Pancreas (tissue), 10 donors: ENCODE measurements at regions of chr2 and their contacts with region 1.

Region 1: GRCh38 chr2:237572021-237572741 is 5.8 kb downstream of the PRLH start:
- DNase-seq: peak; percentile 79 to 99 (median 91)
- ATAC-seq: peak; percentile 91 to 97 (median 96)
- H3K4me3 ChIP-seq: no peak overlapping the region
- H3K27ac ChIP-seq: no peak overlapping the region
- H3K4me1 ChIP-seq: peaks cover 0 to 7% (median 6%) of the 10 kb centered on the region in 3 donors
- H3K27me3 ChIP-seq: no peaks in the 10 kb centered on the region
- CTCF ChIP-seq: peak; percentile 97 to 98 (median 98)

Region 2: GRCh38 chr2:237154082-237154638 is 418.0 kb before region 1 on chr2:
- intact Hi-C with region 1: loop called in 1 of 3 experiments (anchors 10 kb)
- DNase-seq: peak in 1 of 6 donors; percentile 37
- ATAC-seq: peak in 3 of 4 donors; percentile 72 to 83 (median 78)
- H3K4me3 ChIP-seq: no peak overlapping the region
- H3K27ac ChIP-seq: no peak overlapping the region
- H3K4me1 ChIP-seq: no peaks in the 10 kb centered on the region
- H3K27me3 ChIP-seq: no peaks in the 10 kb centered on the region
- CTCF ChIP-seq: peak in 1 of 4 donors; percentile 28

Region 3: DNA sequence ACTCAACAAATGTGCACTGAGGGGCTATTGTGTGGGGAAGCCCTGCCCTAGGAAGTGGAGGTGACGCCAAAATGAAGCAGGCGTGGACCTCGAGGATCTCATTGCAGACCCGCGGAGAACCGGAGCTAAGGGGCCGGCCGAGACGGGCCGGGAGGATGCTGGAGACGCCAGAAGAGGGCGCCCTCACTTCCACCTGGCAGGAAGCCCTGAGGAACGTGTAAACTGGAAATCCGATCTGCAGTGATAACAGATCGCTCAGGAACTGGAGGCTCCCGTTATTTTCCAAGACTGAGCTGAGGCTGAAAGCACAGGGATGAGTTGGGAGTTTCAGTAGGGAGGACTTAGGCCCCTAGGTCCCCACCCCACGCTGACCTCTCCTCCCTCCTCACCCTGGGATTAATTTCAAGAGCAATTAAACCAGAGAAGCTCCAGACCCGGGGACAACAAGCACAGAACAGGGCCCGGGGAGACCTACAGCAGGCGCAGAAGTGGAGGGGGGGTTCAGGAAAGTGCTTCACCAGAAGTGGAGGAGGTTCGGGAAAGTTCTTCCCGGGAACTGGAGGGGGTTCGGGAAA is 150.6 kb before region 1 on chr2:
- intact Hi-C with region 1: loop called in 1 of 3 experiments (anchors 5 kb)
- DNase-seq: peak; percentile 35 to 85 (median 70)
- ATAC-seq: peak; percentile 75 to 96 (median 91)
- H3K4me3 ChIP-seq: no peak overlapping the region
- H3K27ac ChIP-seq: no peak overlapping the region
- H3K4me1 ChIP-seq: peaks cover 0 to 4% (median 2%) of the 10 kb centered on the region in 3 donors
- H3K27me3 ChIP-seq: peaks cover 0 to 6% (median 0%) of the 10 kb centered on the region in 4 donors
- CTCF ChIP-seq: peak; percentile 50 to 75 (median 64)

Region 4: GRCh38 chr2:237512774-237513466 is 59.3 kb before region 1 on chr2:
- intact Hi-C with region 1: loop called in 2 of 3 experiments (anchors 5 kb)
- DNase-seq: peak; percentile 85 to 94 (median 88)
- ATAC-seq: peak; percentile 72 to 91 (median 88)
- H3K4me3 ChIP-seq: no peak overlapping the region
- H3K27ac ChIP-seq: peak overlapping the region; percentile 12 to 71 (median 47)
- H3K4me1 ChIP-seq: peaks cover 14 to 24% (median 15%) of the 10 kb centered on the region in 3 donors
- H3K27me3 ChIP-seq: no peaks in the 10 kb centered on the region
- CTCF ChIP-seq: peak; percentile 83 to 95 (median 92)

Region 5: DNA sequence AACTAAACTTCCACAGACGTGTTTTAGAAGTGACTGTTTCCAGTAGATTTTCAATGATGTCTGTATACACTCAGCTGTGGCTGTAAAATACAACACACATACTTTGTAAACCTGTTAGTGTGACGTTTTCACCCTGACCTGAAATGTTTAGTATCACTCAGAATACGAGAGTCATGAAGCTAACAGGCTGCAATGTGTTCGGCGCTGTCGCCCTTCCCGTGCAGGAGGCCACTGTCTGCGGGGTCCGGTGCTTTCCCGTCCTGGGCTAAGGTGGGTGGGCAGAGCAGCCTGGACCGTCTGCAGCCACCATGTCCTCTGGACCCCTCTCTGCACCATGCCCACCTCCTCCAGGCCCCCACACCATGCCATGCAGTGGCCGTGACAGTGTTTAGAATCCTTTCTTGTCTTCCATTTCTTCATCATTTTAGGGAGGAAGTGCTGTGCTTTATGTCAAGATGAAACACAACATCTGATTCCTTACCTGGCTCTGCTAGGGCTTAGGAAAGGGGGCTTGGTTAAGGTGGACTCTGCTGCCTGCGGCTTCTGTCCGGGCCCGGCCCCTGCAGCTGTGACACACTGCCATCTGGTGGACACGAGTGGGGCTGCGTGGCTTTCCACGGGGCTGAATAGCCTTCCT is 172.6 kb after region 1 on chr2:
- intact Hi-C with region 1: loop called in 1 of 3 experiments (anchors 10 kb)
- DNase-seq: peak; percentile 48 to 94 (median 78)
- ATAC-seq: peak; percentile 85 to 94 (median 94)
- H3K4me3 ChIP-seq: no peak overlapping the region
- H3K27ac ChIP-seq: peak overlapping the region in 1 of 4 donors; percentile 3
- H3K4me1 ChIP-seq: peaks cover 0 to 5% (median 0%) of the 10 kb centered on the region in 3 donors
- H3K27me3 ChIP-seq: no peaks in the 10 kb centered on the region
- CTCF ChIP-seq: peak; percentile 94 to 95 (median 95)